OCI-LY7 (cell line): ENCODE measurements at regions of chr10 and their contacts with region 1.

Region 1: DNA sequence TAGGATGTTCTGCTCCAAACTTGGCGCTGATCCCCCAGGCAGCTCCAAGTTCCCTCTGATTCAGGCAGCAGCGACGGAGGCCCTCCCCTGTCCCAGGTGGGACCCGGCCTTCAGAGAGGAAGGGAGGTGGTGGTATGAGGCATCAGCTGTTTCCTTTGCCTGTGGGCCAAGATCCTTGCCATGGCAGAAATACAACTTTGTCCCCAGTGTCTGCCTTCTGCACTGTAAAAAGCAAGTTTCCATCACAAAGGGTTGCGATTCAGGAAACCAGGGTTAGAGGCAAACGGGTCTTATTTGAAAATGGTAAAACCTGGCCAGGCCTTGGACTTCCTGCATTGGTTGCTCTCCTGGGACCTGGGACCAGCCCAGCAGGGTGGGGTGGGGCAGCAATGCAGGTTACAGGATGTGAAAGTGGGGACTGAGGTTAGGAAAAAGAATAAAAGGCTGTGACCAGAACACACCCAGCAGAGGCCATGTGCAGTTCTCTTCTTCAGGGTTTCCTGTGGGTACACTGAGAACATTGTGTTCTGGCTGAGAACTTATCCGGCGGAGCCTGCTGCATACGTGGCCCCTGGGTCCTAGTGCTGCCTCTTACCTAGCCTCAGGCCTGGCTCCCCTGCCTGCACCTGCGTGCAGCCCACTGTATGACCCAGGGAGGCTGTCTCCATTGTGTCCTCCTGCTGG is 25.1 kb upstream of the DDIT4 start:
- DNase-seq: peak; percentile 95
- H3K4me3 ChIP-seq: peak overlapping the region; percentile 57
- H3K27ac ChIP-seq: peak overlapping the region; percentile 95
- H3K4me1 ChIP-seq: peaks cover 59% of the 10 kb centered on the region
- CTCF ChIP-seq: no peak

Region 2: GRCh38 chr10:72215652-72216549 is 32.7 kb before region 1 on chr10 and contains the starts of genes ANAPC16 and ASCC1:
- CTCF ChIA-PET with region 1: interaction called, 3 read pairs
- POLR2A ChIA-PET with region 1: interaction called, 10 read pairs
- intact Hi-C with region 1: no loop called
- DNase-seq: peak; percentile 94
- H3K4me3 ChIP-seq: peak within 1 kb of the TSS; percentile 82
- H3K27ac ChIP-seq: peak within 1 kb of the TSS; percentile 86
- H3K4me1 ChIP-seq: peaks cover 39% of the 10 kb centered on the region
- CTCF ChIP-seq: no peak
- total RNA-seq, gene ANAPC16: 48.4 and 68.0 TPM in 2 replicates
- total RNA-seq, gene ASCC1: 19.3 and 27.1 TPM in 2 replicates

Region 3: DNA sequence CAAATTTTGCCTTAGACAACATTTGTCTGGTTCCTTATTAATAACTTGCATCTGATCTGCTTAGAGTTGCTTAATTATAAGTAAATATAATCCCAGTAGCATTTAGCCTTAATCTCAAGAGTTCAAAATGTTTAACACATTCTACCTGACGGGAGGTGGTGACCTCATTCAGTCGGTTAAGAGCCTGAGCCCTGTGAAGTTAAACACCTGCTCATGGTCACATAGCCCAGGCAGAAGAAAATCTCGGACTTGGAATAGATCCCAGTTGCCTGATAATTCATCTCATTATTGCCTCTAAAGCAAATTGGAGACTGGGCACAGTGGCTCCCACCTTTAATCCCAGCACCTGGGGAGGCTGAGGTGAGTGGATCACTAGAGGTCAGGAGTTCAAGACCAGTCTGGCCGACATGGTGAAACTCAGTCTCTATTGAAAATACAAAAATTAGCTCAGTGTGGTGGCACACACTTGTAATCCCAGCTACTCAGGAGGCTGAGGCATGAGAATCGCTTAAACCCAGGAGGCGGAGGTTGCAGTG is 14.0 kb before region 1 on chr10:
- CTCF ChIA-PET with region 1: no interaction called
- POLR2A ChIA-PET with region 1: interaction called, 13 read pairs
- intact Hi-C with region 1: no loop called
- DNase-seq: no peak
- H3K4me3 ChIP-seq: no peak overlapping the region
- H3K27ac ChIP-seq: no peak overlapping the region
- H3K4me1 ChIP-seq: no peaks in the 10 kb centered on the region
- CTCF ChIP-seq: no peak

Region 4: GRCh38 chr10:72260588-72261322 is 12.1 kb after region 1 on chr10:
- CTCF ChIA-PET with region 1: no interaction called
- POLR2A ChIA-PET with region 1: interaction called, 37 read pairs
- intact Hi-C with region 1: loop called (anchors 1 kb)
- DNase-seq: peak; percentile 91
- H3K4me3 ChIP-seq: peak overlapping the region; percentile 66
- H3K27ac ChIP-seq: peak overlapping the region; percentile 74
- H3K4me1 ChIP-seq: peaks cover 80% of the 10 kb centered on the region
- CTCF ChIP-seq: peak; percentile 43

Region 5: GRCh38 chr10:72273410-72274212 is 25.0 kb after region 1 on chr10 and contains the start of gene DDIT4:
- CTCF ChIA-PET with region 1: no interaction called
- POLR2A ChIA-PET with region 1: interaction called, 16 read pairs
- intact Hi-C with region 1: loop called (anchors 1 kb)
- DNase-seq: peak; percentile 99
- H3K4me3 ChIP-seq: peak within 1 kb of the TSS; percentile 77
- H3K27ac ChIP-seq: peak within 1 kb of the TSS; percentile 22
- H3K4me1 ChIP-seq: peaks cover 39% of the 10 kb centered on the region
- CTCF ChIP-seq: no peak
- total RNA-seq, gene DDIT4: 102 and 105 TPM in 2 replicates

Region 6: GRCh38 chr10:72297968-72298773 is 49.6 kb after region 1 on chr10:
- CTCF ChIA-PET with region 1: no interaction called
- POLR2A ChIA-PET with region 1: interaction called, 5 read pairs
- intact Hi-C with region 1: loop called (anchors 1 kb)
- DNase-seq: peak; percentile 97
- H3K4me3 ChIP-seq: peak overlapping the region; percentile 71
- H3K27ac ChIP-seq: peak overlapping the region; percentile 83
- H3K4me1 ChIP-seq: peaks cover 36% of the 10 kb centered on the region
- CTCF ChIP-seq: no peak